Activated B cell treated with CpG ODN at 0.5 μM for 24 hours (primary cell): ENCODE measurements at regions of chr17 and their contacts with region 1.

Region 1: GRCh38 chr17:68035523-68036303 is at the start of gene KPNA2:
- DNase-seq: peak; percentile 80
- ATAC-seq: peak; percentile 89
- H3K4me3 Mint-ChIP-seq: peak within 1 kb of the TSS; percentile 93
- H3K27ac Mint-ChIP-seq: peak within 1 kb of the TSS; percentile 92
- H3K4me1 Mint-ChIP-seq: peaks cover 11% of the 10 kb centered on the region
- H3K27me3 Mint-ChIP-seq: no peaks in the 10 kb centered on the region
- CTCF ChIP-seq: no peak
- total RNA-seq, gene KPNA2: 49.5 and 49.9 TPM in 2 replicates

Region 2: DNA sequence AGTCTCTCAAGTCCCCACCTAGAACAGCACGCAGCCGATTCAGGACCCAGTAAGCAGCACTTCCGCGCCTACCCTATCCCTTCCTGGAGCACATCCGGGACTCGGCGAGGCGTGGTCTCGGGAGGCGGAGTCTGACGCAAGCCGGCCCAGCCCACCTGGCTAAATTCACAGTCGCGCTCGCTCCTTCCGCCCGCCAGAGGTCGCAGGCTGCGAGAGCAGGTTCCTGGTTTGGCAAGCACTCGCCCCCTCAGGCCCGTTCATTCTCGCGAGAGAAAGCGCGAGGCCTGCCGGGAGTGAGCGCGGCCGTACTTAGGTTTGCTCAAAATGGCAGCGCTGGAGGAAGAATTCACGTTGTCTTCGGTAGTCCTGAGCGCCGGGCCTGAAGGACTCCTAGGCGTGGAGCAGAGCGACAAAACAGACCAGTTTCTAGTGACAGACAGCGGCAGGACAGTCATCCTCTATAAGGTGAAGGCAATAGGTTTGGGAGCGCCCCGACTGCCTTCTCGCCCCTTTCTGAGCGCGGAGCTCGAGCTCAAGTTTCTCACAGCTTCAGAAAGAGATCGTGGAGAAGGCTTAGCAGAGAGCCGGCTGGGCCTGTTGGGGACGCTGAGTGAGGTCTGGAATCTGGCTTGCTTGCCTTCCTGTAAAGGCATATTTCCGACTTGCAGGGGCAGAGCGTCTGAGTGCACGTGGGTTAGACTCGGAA is 317.9 kb before region 1 on chr17 and contains the start of gene NOL11:
- CTCF ChIA-PET with region 1: no interaction called
- POLR2A ChIA-PET with region 1: interaction called, 7 read pairs
- intact Hi-C with region 1: loop called (anchors 1 kb)
- DNase-seq: peak; percentile 98
- ATAC-seq: peak; percentile 94
- H3K4me3 Mint-ChIP-seq: peak within 1 kb of the TSS; percentile 100
- H3K27ac Mint-ChIP-seq: peak within 1 kb of the TSS; percentile 99
- H3K4me1 Mint-ChIP-seq: peaks cover 30% of the 10 kb centered on the region
- H3K27me3 Mint-ChIP-seq: no peaks in the 10 kb centered on the region
- CTCF ChIP-seq: no peak
- total RNA-seq, gene NOL11: 67.9 and 70.6 TPM in 2 replicates

Region 3: DNA sequence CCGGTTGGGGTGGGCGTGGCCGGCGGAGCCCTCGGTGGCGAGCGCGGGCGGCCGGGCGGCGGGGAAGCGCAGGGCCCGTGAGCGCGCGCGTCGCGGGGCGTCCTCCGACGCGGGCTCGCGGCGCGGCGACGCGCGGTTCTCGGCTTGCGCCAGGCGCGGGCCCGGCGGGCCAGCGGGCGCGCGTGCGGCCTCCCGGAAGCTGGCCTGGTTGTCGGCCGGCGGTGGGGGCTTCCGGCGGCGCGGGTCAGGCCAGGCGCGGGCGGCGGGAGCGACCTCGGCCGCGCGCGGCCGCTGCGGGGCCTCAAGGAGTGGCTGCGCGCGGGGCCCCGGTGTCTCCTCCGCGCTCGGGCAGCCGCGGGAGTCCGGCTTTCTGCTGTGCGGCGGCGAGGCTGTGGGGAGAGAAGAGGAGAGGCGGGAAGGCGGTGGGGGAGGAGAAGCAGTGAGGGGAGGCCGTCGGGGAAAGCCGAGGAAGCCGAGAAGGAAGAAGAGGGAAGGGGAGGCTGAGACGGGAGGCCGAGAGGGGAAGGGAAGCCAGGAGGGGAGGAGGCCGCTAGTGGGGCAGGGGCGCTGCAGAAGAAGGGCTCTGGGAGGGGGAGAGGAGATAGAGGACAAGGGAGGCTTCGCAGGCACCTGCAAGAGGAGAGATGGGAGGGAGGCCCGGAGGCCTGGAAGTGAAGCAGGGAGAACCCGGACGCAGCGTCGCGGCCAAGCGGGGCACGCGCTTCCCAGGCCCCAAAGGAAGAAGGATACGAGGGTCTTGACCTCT is 41.9 kb before region 1 on chr17:
- CTCF ChIA-PET with region 1: no interaction called
- POLR2A ChIA-PET with region 1: interaction called, 5 read pairs
- intact Hi-C with region 1: loop called (anchors 1 kb)
- DNase-seq: peak; percentile 75
- ATAC-seq: peak; percentile 81
- H3K4me3 Mint-ChIP-seq: peak overlapping the region; percentile 88
- H3K27ac Mint-ChIP-seq: peak overlapping the region; percentile 82
- H3K4me1 Mint-ChIP-seq: peaks cover 34% of the 10 kb centered on the region
- H3K27me3 Mint-ChIP-seq: peaks cover 18% of the 10 kb centered on the region
- CTCF ChIP-seq: no peak

Region 4: GRCh38 chr17:68089887-68090286 is 54.2 kb after region 1 on chr17:
- CTCF ChIA-PET with region 1: no interaction called
- POLR2A ChIA-PET with region 1: interaction called, 5 read pairs
- intact Hi-C with region 1: loop called (anchors 5 kb)
- DNase-seq: no peak
- ATAC-seq: no peak
- H3K4me3 Mint-ChIP-seq: no peak overlapping the region
- H3K27ac Mint-ChIP-seq: no peak overlapping the region
- H3K4me1 Mint-ChIP-seq: peaks cover 39% of the 10 kb centered on the region
- H3K27me3 Mint-ChIP-seq: no peaks in the 10 kb centered on the region
- CTCF ChIP-seq: no peak

Region 5: DNA sequence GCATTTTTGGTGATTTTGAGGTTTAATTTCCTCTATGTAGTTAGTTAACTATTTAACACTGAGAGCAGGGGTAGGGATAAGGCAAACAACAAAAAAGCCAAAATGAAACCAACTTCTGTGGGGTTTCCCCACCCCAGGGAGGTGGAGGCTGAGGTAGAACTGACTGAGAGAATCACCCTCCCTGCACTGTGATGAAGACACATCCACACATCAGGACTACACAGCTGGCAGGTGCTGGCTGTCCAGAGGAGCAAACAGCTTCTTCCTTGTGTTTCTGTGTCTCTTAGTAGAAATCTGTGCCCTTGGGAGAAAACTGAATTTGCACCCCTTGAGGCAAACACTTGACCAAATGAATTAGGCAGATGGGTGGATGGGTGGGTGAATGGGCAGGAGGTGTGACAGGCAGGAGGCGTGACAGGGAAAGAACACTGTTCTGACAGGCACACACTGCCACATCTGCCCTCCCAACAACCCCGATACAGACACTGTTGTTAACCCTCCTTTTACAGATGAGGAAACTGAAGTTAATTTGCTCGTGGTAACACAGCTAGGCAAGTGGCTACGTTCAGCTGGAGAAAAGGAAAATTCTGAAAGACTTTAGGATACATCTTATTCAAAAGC is 149.2 kb after region 1 on chr17:
- CTCF ChIA-PET with region 1: no interaction called
- POLR2A ChIA-PET with region 1: interaction called, 5 read pairs
- intact Hi-C with region 1: loop called (anchors 1 kb)
- DNase-seq: no peak
- ATAC-seq: peak; percentile 69
- H3K4me3 Mint-ChIP-seq: peak overlapping the region; percentile 62
- H3K27ac Mint-ChIP-seq: peak overlapping the region; percentile 91
- H3K4me1 Mint-ChIP-seq: peaks cover 66% of the 10 kb centered on the region
- H3K27me3 Mint-ChIP-seq: no peaks in the 10 kb centered on the region
- CTCF ChIP-seq: no peak